ENCODE measurements at regions of chr15 and their contacts with region 1.

Region 1: DNA sequence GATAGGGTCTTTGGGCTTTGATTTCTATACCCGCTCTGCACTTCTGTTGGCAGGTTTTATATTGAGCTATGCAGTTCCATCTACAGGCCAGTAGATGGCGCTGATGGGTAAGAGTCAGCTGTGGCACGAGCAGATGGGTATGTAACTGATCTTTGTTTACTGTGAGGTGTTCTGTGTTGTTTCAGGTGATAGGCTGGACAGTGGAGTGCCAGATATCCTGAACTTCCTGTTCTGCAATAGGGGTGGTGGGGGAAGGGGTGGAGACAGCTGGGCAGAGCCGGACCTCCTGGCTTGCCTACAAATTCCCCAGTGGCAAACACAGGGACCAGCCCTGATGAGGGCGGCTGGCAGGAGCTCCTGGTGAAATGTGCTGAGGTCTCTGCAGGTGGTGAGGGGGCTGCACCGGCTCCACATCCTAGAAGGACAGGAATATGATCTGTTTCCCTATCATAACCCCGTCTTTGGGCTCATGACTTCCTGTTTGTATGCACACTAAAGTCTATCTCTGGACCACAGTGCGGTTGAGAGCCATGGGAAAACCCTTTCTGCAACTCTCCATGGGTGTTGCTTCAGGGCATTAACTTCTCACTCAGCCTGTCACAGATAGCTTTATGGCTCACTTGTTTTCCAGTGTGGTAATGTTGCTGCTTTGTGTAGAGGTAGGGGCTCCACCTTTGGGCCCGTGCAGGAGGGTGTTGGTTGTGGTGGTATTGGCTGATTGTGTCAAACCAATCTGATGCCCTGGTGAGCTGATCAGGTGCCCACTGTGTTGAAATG is 13.4 kb upstream of the FAM98B start:
- DNase-seq: no peak
- H3K4me3 ChIP-seq: no peak overlapping the region
- CTCF ChIP-seq: peak; percentile 83

Region 2: DNA sequence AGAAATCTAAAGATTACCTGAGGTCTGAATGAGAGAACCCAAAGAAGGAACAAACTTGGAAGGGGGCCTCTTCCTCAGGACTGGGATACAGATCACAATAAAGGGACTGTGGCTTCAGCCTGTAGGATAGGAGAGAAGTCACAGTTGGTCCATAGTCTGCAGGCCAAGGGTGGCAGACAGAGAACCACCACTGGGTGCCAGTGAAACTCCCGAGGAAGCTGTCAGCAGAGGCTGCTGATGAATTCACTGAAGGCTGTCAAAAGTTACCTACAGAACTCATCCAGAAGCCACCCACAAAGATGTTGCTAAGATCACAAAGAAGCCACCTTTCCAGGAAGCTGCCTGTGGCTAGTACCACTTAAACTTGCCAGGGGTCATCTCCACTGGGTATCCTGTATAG is 427.6 kb before region 1 on chr15:
- CTCF ChIA-PET with region 1: interaction called, 11 read pairs
- POLR2A ChIA-PET with region 1: no interaction called
- DNase-seq: no peak
- H3K4me3 ChIP-seq: no peak overlapping the region
- CTCF ChIP-seq: no peak

Region 3: DNA sequence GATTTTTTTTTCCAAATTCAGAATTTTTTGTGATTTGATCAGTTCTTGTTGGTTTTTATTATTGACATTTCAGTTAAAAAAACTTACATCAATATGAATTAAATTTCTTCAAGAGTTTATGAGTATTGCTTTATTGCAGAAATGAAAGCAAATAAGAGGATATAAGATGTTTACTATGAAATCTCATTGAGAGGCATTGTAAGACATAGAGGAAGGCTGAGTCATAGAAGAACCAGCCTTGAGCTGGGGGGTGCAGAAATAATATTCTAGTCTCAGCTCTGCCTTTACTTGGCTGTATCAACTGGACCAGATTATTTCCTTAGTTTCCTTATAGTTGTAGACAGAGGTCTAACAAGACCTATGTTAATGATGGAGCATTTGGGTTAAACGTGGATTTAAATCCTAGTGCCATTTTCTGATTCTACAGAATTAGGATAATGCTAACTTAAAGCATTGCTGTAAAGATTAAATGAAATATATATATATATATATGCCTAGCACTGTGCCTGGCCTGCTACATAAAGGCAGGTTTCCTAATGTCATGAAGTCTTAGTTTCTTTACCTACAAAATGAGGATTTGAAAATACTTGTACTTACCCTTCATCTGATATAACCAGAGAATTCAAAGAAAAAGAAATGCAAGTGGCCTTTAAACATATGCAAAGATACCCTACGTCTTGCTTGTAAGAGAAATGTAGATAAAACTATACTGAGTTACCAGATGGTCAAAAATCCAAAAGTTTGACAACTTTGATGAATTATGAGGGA is 20.7 kb after region 1 on chr15:
- CTCF ChIA-PET with region 1: interaction called, 18 read pairs
- POLR2A ChIA-PET with region 1: no interaction called
- DNase-seq: no peak
- H3K4me3 ChIP-seq: no peak overlapping the region
- CTCF ChIP-seq: no peak

Region 4: DNA sequence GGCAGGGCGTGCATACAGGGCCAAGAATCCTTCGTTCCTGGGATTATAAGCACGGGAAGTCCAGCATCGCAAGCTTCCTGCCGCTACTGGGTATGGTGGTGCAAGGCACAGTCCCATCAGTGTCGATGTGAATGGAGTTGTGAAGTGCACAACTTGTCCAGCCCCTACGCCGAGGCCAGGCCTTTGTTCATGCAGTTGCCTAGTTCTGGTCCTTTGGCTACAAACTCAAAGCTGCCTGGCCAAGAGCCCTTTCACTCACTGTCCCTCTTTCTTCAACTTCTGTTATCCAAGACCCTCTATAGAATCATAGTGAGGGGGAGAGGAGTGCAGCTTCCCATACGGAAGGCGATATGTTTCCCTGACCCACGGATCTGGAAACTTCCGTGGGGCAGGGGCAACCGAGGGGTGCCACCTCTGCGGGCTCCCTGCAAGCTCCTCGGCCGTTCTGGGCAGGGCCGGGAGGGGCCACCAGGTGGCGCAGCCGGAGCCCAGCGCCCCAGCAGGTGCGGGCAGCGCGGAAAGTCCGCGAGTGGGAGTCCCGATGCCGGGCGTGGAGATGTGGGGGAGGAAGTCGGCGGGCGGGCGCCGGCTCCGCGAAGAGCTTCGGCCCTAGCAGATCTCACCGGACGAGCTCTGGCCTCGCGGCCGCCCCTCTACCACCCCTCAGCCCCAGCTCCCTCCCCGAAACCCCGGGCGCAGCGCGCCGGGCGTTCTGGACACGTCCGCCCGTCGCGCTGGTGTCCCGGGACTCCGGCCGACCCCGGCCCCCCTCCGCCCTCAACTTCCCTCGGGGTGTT is 123.4 kb after region 1 on chr15:
- CTCF ChIA-PET with region 1: interaction called, 33 read pairs
- POLR2A ChIA-PET with region 1: no interaction called
- DNase-seq: no peak
- H3K4me3 ChIP-seq: peak overlapping the region; percentile 64
- CTCF ChIP-seq: peak; percentile 97

Region 5: DNA sequence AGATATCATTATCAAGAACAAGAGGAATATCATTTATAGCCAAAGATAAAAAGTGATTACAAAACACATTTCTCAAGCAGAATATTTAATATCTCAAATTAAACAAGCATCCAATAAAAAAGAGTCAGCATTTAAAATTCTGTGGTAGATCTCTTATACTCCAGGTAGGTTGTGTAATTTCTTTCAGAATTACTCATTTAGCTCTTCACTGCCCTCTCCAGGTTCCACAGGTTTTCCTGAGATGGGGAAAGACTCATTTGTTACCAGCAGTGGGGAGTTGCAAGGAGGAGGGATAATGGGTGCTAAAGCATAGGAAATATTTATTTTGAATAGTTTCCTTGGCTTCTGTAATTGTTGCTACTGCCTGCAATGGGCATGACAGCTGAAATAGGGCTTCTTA is 207.1 kb after region 1 on chr15:
- CTCF ChIA-PET with region 1: interaction called, 36 read pairs
- POLR2A ChIA-PET with region 1: no interaction called
- DNase-seq: no peak
- H3K4me3 ChIP-seq: no peak overlapping the region
- CTCF ChIP-seq: peak; percentile 27

Region 6: DNA sequence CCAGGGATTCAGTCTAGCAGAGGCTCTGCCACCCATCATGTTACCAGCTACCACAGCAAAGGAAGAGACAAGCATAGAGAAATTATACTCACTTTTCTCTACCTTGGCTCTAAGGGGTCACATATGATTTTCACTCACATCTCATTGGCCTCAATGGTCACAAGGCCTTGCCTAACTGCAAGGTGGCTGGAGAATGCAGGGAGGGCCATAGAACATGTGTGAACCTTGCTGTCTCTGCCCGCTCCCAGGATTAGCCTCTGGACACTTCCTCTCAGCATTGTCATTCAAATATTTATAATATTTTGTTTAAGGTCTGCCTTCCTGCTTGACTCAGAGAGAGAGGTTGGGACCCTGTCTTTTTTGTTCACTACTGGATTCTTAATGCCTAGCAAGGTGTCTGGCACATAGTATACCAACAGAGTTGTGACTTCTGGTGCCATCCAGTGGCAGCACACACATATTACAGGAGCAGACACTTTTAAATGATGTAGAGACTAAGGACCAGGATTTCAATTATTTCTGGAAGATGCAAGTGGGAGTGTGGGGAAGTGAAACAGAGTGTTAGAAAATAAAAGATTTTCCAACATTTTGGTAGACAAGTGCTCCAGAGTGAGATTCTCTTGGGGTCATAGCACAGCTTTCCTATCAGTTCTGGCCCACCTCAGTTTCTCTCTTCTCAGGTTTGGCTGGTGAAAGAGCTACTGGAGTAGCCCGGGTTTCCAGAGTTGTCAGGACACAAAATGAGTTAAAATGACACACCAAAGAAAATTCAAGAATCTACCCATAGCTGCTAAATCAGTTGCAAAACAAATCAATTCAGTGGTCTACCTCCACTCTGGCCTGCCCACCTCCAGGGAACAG is 243.1 kb after region 1 on chr15:
- CTCF ChIA-PET with region 1: interaction called, 325 read pairs
- POLR2A ChIA-PET with region 1: no interaction called
- DNase-seq: no peak
- H3K4me3 ChIP-seq: no peak overlapping the region
- CTCF ChIP-seq: peak; percentile 65

Measured in AG04449 (cell line).